ENCODE measurements at regions of chr2 and their contacts with region 1.

Region 1: GRCh38 chr2:205680067-205680466 is 2.2 kb upstream of the NRP2 start:
- DNase-seq: peak; percentile 97
- H3K4me3 ChIP-seq: no peak overlapping the region
- H3K27ac ChIP-seq: no peak overlapping the region
- H3K4me1 ChIP-seq: peaks cover 13% of the 10 kb centered on the region
- H3K27me3 ChIP-seq: peaks cover 27% of the 10 kb centered on the region
- CTCF ChIP-seq: peak; percentile 91

Region 2: DNA sequence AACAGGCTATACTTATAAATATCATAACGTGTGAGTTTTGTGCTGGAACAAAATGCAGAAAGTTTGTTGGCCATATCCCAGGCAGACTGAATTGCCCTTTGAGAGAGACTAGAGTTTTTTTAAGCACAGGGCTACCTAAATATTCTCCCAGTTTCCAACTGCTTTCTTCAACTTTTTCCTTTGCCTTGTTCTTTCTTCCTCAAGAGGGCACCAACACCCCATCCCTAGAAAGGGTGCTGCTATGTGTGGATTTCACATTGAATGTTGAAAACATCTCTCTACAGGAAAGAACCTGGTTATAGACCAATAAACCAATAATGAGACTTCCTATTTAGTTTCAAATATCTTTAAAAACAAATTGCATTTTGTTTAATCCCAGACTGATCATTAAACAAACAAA is 1655.6 kb before region 1 on chr2:
- CTCF ChIA-PET with region 1: no interaction called
- POLR2A ChIA-PET with region 1: no interaction called
- intact Hi-C with region 1: loop called (anchors 10 kb)
- DNase-seq: peak; percentile 76
- H3K4me3 ChIP-seq: no peak overlapping the region
- H3K27ac ChIP-seq: no peak overlapping the region
- H3K4me1 ChIP-seq: peaks cover 21% of the 10 kb centered on the region
- H3K27me3 ChIP-seq: no peaks in the 10 kb centered on the region
- CTCF ChIP-seq: peak; percentile 76

Region 3: DNA sequence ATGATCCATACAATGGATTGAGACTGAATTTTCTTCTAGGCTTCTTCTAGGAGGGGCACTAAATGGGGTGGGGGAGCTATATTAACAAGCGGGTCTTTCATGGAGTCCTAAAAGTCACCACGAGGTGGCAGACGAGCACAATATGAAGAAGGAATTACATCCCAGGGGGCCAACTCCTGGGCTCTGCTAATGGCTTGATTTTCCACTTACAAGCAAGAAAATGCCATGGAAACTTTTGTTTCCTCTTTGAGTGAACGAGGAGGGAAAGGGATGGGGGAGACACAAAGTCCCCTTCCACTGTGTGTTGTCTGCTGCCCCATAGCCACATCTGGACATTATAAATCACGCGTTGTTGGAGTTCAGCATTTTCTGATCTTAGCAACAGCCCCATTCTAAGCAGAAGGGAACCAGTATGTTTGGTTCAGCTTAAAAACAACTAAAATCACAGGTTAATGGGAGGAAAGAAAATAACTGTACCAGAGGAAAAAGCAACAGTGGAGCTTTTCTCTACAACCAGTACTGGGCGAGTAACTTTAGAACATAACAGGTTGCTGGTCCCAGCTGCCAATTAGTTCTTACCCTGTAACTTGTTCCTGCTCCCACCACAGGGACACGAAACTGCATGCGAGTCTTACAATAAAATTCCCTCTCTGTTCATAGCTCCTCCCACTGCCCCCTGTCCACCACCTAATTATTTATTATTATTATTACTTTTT is 1419.7 kb before region 1 on chr2:
- CTCF ChIA-PET with region 1: interaction called, 5 read pairs
- POLR2A ChIA-PET with region 1: no interaction called
- intact Hi-C with region 1: loop called (anchors 2 kb)
- DNase-seq: peak; percentile 91
- H3K4me3 ChIP-seq: no peak overlapping the region
- H3K27ac ChIP-seq: no peak overlapping the region
- H3K4me1 ChIP-seq: peaks cover 39% of the 10 kb centered on the region
- H3K27me3 ChIP-seq: no peaks in the 10 kb centered on the region
- CTCF ChIP-seq: peak; percentile 90

Region 4: DNA sequence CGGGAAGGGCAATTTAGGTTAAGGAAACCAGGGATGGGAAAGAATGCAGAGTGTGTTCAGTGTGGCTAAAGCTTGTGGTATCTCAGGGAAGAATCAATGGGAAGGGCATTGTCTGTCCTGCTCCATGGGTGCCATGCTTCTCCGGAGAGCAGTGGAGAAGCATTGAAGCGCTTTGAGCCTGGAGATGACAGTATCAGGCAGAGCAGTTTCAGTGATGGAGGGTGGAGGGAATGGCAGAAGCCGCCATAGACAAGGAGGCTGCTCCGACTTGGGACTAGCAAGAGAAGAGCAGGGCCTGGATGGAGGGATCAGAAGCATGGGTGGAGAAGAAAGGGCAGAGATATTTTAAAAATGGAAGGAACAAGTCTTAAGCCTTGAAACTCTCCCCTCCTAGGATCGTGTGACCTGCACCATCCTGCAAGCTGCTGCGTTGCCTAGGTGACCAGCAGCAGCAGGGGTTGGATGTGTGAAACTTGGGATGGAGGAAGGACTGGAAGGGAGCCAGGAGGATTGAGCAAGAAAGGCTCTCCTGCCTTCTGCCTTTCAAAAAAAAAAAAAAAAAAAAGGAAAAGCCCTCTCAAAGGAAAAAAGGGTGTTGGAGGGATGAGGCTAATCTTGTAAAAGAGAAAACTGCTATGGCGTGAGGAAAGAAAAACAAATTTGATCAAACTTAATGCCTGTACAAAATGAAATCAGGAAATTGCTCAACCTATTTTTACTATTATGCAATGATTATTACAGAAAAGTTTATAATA is 491.7 kb before region 1 on chr2:
- CTCF ChIA-PET with region 1: no interaction called
- POLR2A ChIA-PET with region 1: no interaction called
- intact Hi-C with region 1: loop called (anchors 5 kb)
- DNase-seq: peak; percentile 76
- H3K4me3 ChIP-seq: no peak overlapping the region
- H3K27ac ChIP-seq: no peak overlapping the region
- H3K4me1 ChIP-seq: peaks cover 14% of the 10 kb centered on the region
- H3K27me3 ChIP-seq: no peaks in the 10 kb centered on the region
- CTCF ChIP-seq: no peak

Region 5: GRCh38 chr2:205885492-205886099 is 205.5 kb after region 1 on chr2:
- CTCF ChIA-PET with region 1: no interaction called
- POLR2A ChIA-PET with region 1: no interaction called
- intact Hi-C with region 1: loop called (anchors 5 kb)
- DNase-seq: peak; percentile 91
- H3K4me3 ChIP-seq: no peak overlapping the region
- H3K27ac ChIP-seq: no peak overlapping the region
- H3K4me1 ChIP-seq: no peaks in the 10 kb centered on the region
- H3K27me3 ChIP-seq: no peaks in the 10 kb centered on the region
- CTCF ChIP-seq: peak; percentile 94

Region 6: DNA sequence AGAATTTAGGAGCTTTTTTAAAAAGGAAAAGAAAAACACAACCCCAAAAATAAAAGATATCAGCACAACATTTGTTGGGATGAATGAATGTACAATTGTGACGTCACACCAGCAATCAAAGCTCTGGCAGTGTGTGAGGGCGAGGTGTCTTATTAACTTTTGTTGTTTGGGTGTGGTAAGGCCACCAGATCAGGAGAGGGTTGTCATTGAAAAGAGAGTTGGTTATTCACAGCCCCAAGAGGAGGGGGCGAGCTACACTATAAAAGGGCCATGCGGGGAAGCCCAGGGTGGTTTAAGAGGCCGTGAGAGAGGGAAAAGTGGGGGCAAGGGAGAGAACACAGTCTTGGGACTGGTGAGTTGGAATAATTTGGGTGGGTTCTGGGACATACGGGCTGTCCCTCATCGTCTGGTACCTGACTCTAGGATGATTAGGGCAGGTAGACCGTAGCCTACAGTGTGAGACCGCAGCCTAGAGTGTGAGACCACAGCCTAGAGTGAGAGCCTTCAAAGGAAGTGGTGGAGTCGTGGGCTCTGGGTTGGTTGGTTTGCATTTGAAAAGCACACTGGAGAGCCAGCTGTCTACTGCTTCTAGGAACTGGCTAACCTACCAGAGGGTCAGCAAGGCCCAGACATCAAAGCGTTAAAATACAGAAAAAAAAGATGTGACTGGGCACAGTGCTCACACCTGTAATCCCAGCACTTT is 277.5 kb after region 1 on chr2:
- CTCF ChIA-PET with region 1: no interaction called
- POLR2A ChIA-PET with region 1: no interaction called
- intact Hi-C with region 1: no loop called
- DNase-seq: no peak
- H3K4me3 ChIP-seq: no peak overlapping the region
- H3K27ac ChIP-seq: no peak overlapping the region
- H3K4me1 ChIP-seq: no peaks in the 10 kb centered on the region
- H3K27me3 ChIP-seq: no peaks in the 10 kb centered on the region
- CTCF ChIP-seq: no peak

Region 7: GRCh38 chr2:206193671-206194382 is 513.8 kb after region 1 on chr2:
- CTCF ChIA-PET with region 1: no interaction called
- POLR2A ChIA-PET with region 1: no interaction called
- intact Hi-C with region 1: no loop called
- DNase-seq: no peak
- H3K4me3 ChIP-seq: no peak overlapping the region
- H3K27ac ChIP-seq: no peak overlapping the region
- H3K4me1 ChIP-seq: no peaks in the 10 kb centered on the region
- H3K27me3 ChIP-seq: no peaks in the 10 kb centered on the region
- CTCF ChIP-seq: no peak

Region 8: DNA sequence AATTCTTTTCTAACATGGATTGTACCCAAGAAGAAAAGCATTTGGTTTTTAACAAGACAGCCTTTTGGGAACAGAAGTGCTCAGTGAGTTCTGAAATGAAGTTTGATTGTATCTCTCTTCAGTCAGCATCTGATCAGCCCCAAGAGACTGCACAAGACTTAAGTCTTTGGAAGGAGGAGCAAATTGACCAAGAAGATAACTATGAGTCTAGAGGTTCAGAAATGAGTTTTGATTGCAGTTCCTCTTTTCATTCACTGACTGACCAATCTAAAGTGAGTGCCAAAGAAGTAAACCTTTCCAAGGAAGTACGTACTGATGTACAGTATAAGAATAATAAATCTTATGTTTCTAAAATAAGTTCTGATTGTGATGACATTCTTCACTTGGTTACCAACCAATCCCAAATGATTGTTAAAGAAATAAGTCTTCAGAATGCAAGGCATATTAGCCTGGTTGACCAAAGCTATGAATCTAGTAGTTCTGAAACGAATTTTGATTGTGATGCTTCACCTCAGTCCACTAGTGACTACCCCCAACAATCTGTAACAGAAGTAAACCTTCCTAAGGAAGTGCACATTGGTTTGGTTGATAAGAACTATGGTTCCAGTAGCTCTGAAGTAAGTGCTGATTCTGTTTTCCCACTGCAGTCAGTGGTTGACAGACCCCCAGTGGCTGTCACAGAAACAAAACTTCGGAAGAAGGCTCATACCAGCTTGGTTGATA is 625.6 kb after region 1 on chr2:
- CTCF ChIA-PET with region 1: no interaction called
- POLR2A ChIA-PET with region 1: no interaction called
- intact Hi-C with region 1: no loop called
- DNase-seq: no peak
- H3K4me3 ChIP-seq: no peak overlapping the region
- H3K27ac ChIP-seq: no peak overlapping the region
- H3K4me1 ChIP-seq: no peaks in the 10 kb centered on the region
- H3K27me3 ChIP-seq: peaks cover 57% of the 10 kb centered on the region
- CTCF ChIP-seq: no peak

Measured in A673 (cell line).